ENCODE measurements at regions of chr1 and their contacts with region 1.

Region 1: DNA sequence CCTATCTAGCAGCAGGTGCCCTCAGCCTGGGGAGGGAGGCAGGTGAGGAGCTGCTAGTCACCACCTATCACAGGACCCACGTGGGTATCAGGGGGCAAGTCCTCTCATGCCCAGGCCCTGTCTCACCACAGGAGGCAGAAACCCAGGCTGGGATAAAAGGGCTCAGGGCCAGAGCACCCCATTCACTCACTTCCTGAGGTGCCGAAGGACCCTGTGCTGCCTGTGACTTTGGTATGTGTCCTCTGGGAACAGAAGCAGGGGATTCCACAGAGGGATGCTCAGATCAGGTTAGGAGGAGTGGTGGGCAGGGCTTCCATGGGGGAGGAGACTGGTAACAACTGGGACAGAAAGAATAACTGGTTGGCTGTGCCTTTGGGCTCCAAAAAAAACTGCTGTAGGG is at the start of gene LCE1E:
- DNase-seq: no peak
- ATAC-seq: no peak
- H3K4me3 ChIP-seq: no peak within 1 kb of the TSS
- H3K4me3 Mint-ChIP-seq: no peak within 1 kb of the TSS
- H3K27ac ChIP-seq: no peak within 1 kb of the TSS
- H3K27ac Mint-ChIP-seq: no peak within 1 kb of the TSS
- H3K4me1 ChIP-seq: no peaks in the 10 kb centered on the region
- H3K4me1 Mint-ChIP-seq: no peaks in the 10 kb centered on the region
- H3K27me3 ChIP-seq: no peaks in the 10 kb centered on the region
- H3K27me3 Mint-ChIP-seq: peaks cover 32% of the 10 kb centered on the region
- CTCF ChIP-seq: no peak
- total RNA-seq, gene LCE1E: not detected

Region 2: DNA sequence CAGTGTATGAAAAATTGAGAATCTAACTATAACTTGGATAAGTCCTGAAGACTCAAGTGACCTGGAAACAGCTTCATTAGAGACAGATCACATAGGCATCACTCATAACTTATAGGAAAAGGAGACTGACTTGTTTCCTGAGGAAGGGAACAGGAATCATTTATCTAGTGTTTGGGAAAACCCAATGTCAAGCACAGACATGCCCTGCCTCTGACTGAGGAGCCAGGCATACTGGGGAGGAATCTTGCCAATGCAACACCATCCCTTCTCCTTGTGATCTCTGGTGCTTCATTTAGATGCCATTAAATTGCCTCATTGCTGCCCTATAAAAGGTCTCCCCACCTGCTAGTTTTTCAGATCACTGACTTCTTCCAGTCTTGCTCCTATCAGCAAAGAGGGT is 67.8 kb before region 1 on chr1:
- CTCF ChIA-PET with region 1: no interaction called
- POLR2A ChIA-PET with region 1: no interaction called
- intact Hi-C with region 1: loop called in 1 of 2 experiments (anchors 10 kb)
- DNase-seq: no peak
- ATAC-seq: no peak
- H3K4me3 ChIP-seq: no peak overlapping the region
- H3K4me3 Mint-ChIP-seq: no peak overlapping the region
- H3K27ac ChIP-seq: no peak overlapping the region
- H3K27ac Mint-ChIP-seq: no peak overlapping the region
- H3K4me1 ChIP-seq: no peaks in the 10 kb centered on the region
- H3K4me1 Mint-ChIP-seq: no peaks in the 10 kb centered on the region
- H3K27me3 ChIP-seq: no peaks in the 10 kb centered on the region
- H3K27me3 Mint-ChIP-seq: peaks cover 16% of the 10 kb centered on the region
- CTCF ChIP-seq: no peak

Region 3: DNA sequence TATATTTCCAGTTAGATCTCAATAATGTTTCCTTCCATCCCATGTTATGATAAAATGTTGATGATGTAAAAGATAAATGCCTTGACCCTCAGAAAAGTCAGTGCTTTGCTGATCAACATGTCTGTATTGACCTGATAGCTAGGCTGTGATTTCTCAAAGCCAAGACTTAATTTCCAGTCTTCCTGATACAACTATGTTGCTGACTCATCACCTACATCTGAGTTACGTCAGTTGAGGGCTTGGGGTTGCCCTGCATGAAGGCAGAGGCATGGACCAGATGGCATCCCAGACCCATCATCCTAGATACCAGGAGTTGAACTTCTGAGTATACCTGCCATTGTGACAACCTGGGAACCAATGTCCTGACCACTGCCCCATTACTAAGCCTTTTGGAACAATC is 15.3 kb after region 1 on chr1:
- CTCF ChIA-PET with region 1: no interaction called
- POLR2A ChIA-PET with region 1: no interaction called
- intact Hi-C with region 1: loop called (anchors 1 to 2 kb)
- DNase-seq: no peak
- ATAC-seq: no peak
- H3K4me3 ChIP-seq: no peak overlapping the region
- H3K4me3 Mint-ChIP-seq: no peak overlapping the region
- H3K27ac ChIP-seq: no peak overlapping the region
- H3K27ac Mint-ChIP-seq: no peak overlapping the region
- H3K4me1 ChIP-seq: no peaks in the 10 kb centered on the region
- H3K4me1 Mint-ChIP-seq: no peaks in the 10 kb centered on the region
- H3K27me3 ChIP-seq: no peaks in the 10 kb centered on the region
- H3K27me3 Mint-ChIP-seq: peaks cover 25% of the 10 kb centered on the region
- CTCF ChIP-seq: no peak